ENCODE measurements at regions of chr10 and their contacts with region 1.

Region 1: DNA sequence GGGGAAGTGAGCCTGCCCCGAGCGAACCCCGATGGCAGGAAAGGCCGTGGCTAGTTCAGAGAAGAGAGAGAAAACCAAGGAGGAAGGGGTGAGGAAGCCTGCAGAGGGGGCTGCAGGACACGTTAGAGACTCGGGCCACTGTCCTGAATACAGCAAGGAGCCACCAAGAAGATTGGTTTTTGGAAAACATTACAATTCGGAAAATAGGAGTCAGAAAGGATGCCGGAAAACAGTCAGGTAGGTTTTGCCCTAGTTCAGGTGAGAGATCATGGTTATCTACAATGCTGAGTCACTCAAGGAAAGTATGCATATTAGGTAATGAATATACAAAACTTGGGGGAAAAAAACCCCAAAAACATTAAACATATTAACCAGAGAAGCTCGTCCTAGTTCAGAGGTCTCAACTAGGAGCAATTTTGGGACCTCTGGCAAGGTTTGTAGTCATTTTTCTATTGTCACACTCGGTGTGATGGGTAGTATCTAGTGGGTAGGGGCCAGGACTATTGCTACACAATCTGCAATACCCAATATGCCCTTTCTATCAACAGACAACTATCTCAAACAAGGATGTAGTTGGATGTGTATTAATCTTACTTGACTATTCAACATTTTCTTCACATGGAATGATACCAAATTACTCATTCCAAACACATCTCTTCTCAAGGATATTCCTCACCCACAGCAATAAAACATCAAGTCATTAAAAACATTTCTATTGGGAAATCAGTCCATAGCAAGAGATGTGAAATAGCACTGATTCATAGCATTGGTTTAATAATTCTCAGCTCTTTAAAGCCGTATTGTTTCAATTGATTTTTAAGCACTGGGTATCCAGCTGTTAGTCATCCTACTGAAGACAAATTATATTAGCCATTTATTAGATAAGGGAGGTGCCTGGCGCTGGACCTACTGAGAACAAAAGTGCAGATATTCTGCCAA is 74.4 kb upstream of the RSU1 start:
- DNase-seq: peak; percentile 72
- ATAC-seq: peak; percentile 96
- H3K4me3 Mint-ChIP-seq: peak overlapping the region; percentile 56
- H3K27ac Mint-ChIP-seq: peak overlapping the region; percentile 48
- H3K4me1 Mint-ChIP-seq: peaks cover 13% of the 10 kb centered on the region
- H3K27me3 Mint-ChIP-seq: no peaks in the 10 kb centered on the region

Region 2: GRCh38 chr10:16756561-16757222 is 135.0 kb before region 1 on chr10:
- CTCF ChIA-PET with region 1: no interaction called
- POLR2A ChIA-PET with region 1: no interaction called
- intact Hi-C with region 1: no loop called
- DNase-seq: no peak
- ATAC-seq: no peak
- H3K4me3 Mint-ChIP-seq: no peak overlapping the region
- H3K27ac Mint-ChIP-seq: no peak overlapping the region
- H3K4me1 Mint-ChIP-seq: no peaks in the 10 kb centered on the region
- H3K27me3 Mint-ChIP-seq: no peaks in the 10 kb centered on the region

Region 3: GRCh38 chr10:17001961-17002749 is 110.5 kb after region 1 on chr10:
- CTCF ChIA-PET with region 1: no interaction called
- POLR2A ChIA-PET with region 1: interaction called, 4 read pairs
- intact Hi-C with region 1: loop called in 1 of 2 experiments (anchors 1 kb)
- DNase-seq: peak; percentile 34
- ATAC-seq: peak; percentile 62
- H3K4me3 Mint-ChIP-seq: peak overlapping the region; percentile 24
- H3K27ac Mint-ChIP-seq: peak overlapping the region; percentile 91
- H3K4me1 Mint-ChIP-seq: peaks cover 64% of the 10 kb centered on the region
- H3K27me3 Mint-ChIP-seq: peaks cover 12% of the 10 kb centered on the region

Region 4: DNA sequence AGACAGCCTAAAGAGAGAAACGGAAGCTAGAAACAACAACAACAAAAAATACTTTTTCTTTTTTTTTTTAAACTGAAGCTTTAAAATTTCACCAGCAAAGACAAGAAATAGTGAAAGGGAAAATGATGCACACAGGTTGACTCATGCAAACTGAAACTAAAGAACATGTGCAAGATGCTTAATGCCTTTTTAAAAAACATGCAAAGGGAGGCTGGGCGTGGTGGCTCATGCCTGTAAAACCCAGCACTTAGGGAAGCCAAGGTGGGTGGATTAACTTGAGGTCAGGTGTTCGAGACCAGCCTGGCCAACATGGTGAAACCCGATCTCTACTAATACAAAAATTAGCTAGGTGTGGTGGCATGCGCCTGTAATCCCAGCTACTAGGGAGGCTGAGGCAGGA is 253.1 kb after region 1 on chr10:
- CTCF ChIA-PET with region 1: interaction called, 5 read pairs
- POLR2A ChIA-PET with region 1: interaction called, 3 read pairs
- intact Hi-C with region 1: loop called in 1 of 2 experiments (anchors 2 kb)
- DNase-seq: peak; percentile 80
- ATAC-seq: peak; percentile 96
- H3K4me3 Mint-ChIP-seq: no peak overlapping the region
- H3K27ac Mint-ChIP-seq: peak overlapping the region; percentile 51
- H3K4me1 Mint-ChIP-seq: peaks cover 31% of the 10 kb centered on the region
- H3K27me3 Mint-ChIP-seq: no peaks in the 10 kb centered on the region

Region 5: GRCh38 chr10:17175551-17175950 is 283.9 kb after region 1 on chr10:
- CTCF ChIA-PET with region 1: no interaction called
- POLR2A ChIA-PET with region 1: no interaction called
- intact Hi-C with region 1: loop called in 1 of 2 experiments (anchors 5 kb)
- DNase-seq: peak; percentile 19
- ATAC-seq: peak; percentile 64
- H3K4me3 Mint-ChIP-seq: peak overlapping the region; percentile 56
- H3K27ac Mint-ChIP-seq: peak overlapping the region; percentile 43
- H3K4me1 Mint-ChIP-seq: peaks cover 20% of the 10 kb centered on the region
- H3K27me3 Mint-ChIP-seq: no peaks in the 10 kb centered on the region

Region 6: DNA sequence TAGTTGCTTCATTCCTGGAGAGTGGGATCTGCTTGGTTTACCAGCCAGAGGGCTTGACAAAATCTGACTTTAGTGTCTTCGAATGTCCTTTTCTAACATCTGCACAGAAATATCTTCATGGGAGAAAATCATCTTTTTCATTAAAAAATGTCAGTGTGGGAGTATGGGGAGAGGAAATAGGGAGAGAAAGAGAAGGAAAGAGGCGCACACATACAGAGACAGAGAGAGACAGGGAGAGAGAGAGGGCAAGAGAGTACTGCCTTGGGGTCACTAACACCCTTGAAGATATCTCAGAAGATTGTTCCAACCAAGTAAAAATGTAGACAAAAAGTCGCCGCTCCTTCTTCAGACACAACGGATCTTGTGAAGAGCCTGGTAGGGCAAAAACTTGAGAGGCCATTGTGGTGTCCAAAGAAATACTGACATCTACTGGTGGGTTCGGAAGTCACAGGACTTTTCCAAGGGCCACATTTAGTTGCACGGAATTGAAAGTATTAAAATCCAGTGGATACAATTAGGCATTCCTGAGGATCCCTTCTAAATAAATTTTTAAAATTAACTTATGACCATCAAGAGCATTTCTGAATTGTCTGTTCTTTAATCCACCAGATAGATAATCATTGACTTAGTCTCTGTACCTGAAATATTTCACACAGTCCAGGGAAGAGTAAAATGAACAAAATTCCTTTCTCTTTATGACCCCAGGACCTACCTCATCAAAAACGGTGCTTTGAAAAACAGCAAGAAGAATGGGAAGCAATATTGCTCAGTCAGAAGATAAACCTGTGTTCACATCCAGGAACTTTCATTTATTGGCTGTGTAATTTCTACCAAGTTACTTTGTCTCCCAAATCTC is 366.1 kb after region 1 on chr10:
- CTCF ChIA-PET with region 1: interaction called, 4 read pairs
- POLR2A ChIA-PET with region 1: no interaction called
- intact Hi-C with region 1: loop called (anchors 1 to 5 kb)
- DNase-seq: peak; percentile 66
- ATAC-seq: peak; percentile 86
- H3K4me3 Mint-ChIP-seq: peak overlapping the region; percentile 9
- H3K27ac Mint-ChIP-seq: peak overlapping the region; percentile 0
- H3K4me1 Mint-ChIP-seq: peaks cover 7% of the 10 kb centered on the region
- H3K27me3 Mint-ChIP-seq: peaks cover 3% of the 10 kb centered on the region